ENCODE measurements at regions of chr7 and their contacts with region 1.

Region 1: GRCh38 chr7:98617051-98617959 is at the start of gene NPTX2:
- DNase-seq: no peak
- ATAC-seq: no peak
- H3K4me3 ChIP-seq: no peak within 1 kb of the TSS
- H3K4me3 Mint-ChIP-seq: no peak within 1 kb of the TSS
- H3K27ac ChIP-seq: no peak within 1 kb of the TSS
- H3K27ac Mint-ChIP-seq: no peak within 1 kb of the TSS
- H3K4me1 ChIP-seq: no peaks in the 10 kb centered on the region
- H3K4me1 Mint-ChIP-seq: peaks cover 7% of the 10 kb centered on the region
- H3K27me3 ChIP-seq: peaks cover 0 to 3% of the 10 kb centered on the region in 2 experiments
- H3K27me3 Mint-ChIP-seq: peaks cover 46% of the 10 kb centered on the region
- CTCF ChIP-seq: no peak
- total RNA-seq, gene NPTX2: not detected

Region 2: GRCh38 chr7:98448766-98449165 is 168.5 kb before region 1 on chr7:
- CTCF ChIA-PET with region 1: no interaction called
- POLR2A ChIA-PET with region 1: no interaction called
- intact Hi-C with region 1: loop called in 1 of 2 experiments (anchors 5 kb)
- DNase-seq: no peak
- ATAC-seq: no peak
- H3K4me3 ChIP-seq: no peak overlapping the region
- H3K4me3 Mint-ChIP-seq: no peak overlapping the region
- H3K27ac ChIP-seq: no peak overlapping the region
- H3K27ac Mint-ChIP-seq: no peak overlapping the region
- H3K4me1 ChIP-seq: no peaks in the 10 kb centered on the region
- H3K4me1 Mint-ChIP-seq: no peaks in the 10 kb centered on the region
- H3K27me3 ChIP-seq: no peaks in the 10 kb centered on the region
- H3K27me3 Mint-ChIP-seq: peaks cover 8% of the 10 kb centered on the region
- CTCF ChIP-seq: no peak

Measured in CD8-positive, alpha-beta T cell (primary cell).